ENCODE measurements at regions of chrX and their contacts with region 1.

Region 1: GRCh38 chrX:45710081-45710801 is 509.6 kb upstream of the DIPK2B start:
- DNase-seq: peak; percentile 79
- H3K4me3 Mint-ChIP-seq: peak overlapping the region; percentile 21
- H3K27ac Mint-ChIP-seq: peak overlapping the region; percentile 78
- H3K4me1 Mint-ChIP-seq: peaks cover 49% of the 10 kb centered on the region
- H3K27me3 Mint-ChIP-seq: no peaks in the 10 kb centered on the region

Region 2: DNA sequence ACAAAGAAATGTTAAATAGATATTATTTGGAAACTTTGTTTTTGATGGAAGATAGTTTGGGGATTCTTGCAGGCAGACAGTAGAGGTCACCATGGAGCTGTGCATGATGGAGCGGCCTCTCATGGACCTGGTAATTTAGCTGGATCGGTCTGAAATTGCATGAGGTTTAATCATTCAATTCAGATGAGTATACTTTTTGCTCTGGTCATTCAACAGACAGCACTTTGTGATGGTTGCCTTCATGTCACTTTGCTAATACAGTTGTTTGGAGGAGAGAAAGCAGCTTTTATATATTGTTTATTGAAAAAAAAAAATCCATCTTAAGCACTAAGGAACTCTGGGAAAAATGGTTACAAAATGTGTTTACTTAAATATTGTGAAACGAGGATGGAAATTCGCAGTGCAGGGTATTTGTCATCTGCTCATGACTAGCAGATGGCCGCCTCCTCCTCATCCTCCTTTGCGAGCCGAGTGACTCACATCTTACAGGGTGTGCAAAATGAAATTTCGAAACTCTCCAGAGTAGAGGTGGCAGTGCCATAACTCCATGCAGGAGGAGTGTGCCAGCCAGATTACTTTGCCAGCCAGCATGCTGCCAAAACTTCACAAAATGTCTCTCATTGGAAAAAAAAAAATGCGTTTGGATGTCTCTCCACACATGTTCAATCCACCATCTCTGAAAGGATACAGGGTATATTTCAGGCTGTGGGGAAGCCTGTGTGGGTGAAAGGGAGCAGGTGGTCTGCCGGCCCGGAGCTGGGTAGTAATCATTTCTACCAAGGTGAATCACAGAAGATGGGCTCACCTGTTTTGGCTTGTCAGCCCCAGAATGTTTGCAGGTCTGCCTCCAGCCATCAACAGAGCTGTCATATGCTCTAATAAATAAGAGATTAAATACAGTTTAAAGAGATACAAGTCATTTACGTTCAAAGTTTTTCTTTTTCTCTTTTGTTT is 194.7 kb before region 1 on chrX:
- CTCF ChIA-PET with region 1: no interaction called
- POLR2A ChIA-PET with region 1: no interaction called
- intact Hi-C with region 1: loop called (anchors 10 kb)
- DNase-seq: peak; percentile 53
- H3K4me3 Mint-ChIP-seq: no peak overlapping the region
- H3K27ac Mint-ChIP-seq: peak overlapping the region; percentile 49
- H3K4me1 Mint-ChIP-seq: peaks cover 17% of the 10 kb centered on the region
- H3K27me3 Mint-ChIP-seq: peaks cover 3% of the 10 kb centered on the region

Region 3: GRCh38 chrX:45621376-45622041 is 88.7 kb before region 1 on chrX:
- CTCF ChIA-PET with region 1: interaction called, 4 read pairs
- POLR2A ChIA-PET with region 1: interaction called, 27 read pairs
- intact Hi-C with region 1: loop called (anchors 1 kb)
- DNase-seq: peak; percentile 31
- H3K4me3 Mint-ChIP-seq: no peak overlapping the region
- H3K27ac Mint-ChIP-seq: peak overlapping the region; percentile 83
- H3K4me1 Mint-ChIP-seq: peaks cover 23% of the 10 kb centered on the region
- H3K27me3 Mint-ChIP-seq: peaks cover 2% of the 10 kb centered on the region

Region 4: GRCh38 chrX:45697591-45697990 is 12.7 kb before region 1 on chrX:
- CTCF ChIA-PET with region 1: no interaction called
- POLR2A ChIA-PET with region 1: no interaction called
- intact Hi-C with region 1: loop called (anchors 2 kb)
- DNase-seq: no peak
- H3K4me3 Mint-ChIP-seq: no peak overlapping the region
- H3K27ac Mint-ChIP-seq: no peak overlapping the region
- H3K4me1 Mint-ChIP-seq: peaks cover 22% of the 10 kb centered on the region
- H3K27me3 Mint-ChIP-seq: no peaks in the 10 kb centered on the region

Region 5: GRCh38 chrX:45758319-45758718 is 48.1 kb after region 1 on chrX:
- CTCF ChIA-PET with region 1: interaction called, 5 read pairs
- POLR2A ChIA-PET with region 1: interaction called, 30 read pairs
- intact Hi-C with region 1: loop called (anchors 1 kb)
- DNase-seq: peak; percentile 73
- H3K4me3 Mint-ChIP-seq: peak overlapping the region; percentile 77
- H3K27ac Mint-ChIP-seq: peak overlapping the region; percentile 92
- H3K4me1 Mint-ChIP-seq: peaks cover 72% of the 10 kb centered on the region
- H3K27me3 Mint-ChIP-seq: no peaks in the 10 kb centered on the region

Region 6: DNA sequence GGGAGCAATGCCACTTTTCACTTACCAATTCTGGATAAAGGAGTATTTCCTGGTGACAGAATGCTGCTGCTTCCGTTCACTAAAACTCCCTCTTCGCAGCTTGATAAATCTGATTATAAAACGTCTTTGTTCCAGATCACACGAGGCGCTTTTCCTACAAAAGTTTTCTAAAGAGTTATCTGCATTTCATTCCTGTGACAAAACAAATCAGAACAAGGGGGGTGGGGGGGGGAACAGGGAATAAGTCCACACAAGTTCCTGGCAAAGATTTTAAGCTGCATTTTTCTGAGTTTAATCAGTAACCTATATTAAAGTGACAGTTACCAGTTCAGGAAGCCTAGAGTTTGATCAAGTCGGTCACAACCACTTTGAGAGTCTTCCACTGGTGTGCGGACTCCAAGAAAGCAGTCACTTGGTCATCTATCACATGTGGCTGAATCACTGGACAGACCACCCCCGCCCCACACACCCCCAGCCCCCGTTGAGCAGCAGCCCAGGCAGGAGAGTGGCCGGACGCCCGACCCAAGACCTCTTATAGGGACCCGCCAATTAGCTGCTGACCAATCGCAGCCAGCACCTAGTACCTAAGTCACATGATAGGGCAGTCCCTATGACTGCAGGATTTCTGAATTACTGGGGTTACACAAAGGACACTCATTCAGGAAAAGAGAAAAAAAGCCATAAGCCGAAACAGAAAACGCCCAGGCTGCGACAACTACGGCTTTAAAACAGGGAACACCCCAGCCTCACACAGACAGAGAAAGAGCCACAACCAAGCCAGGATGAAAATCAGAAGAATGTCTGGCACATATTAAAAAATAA is 59.7 kb after region 1 on chrX:
- CTCF ChIA-PET with region 1: interaction called, 5 read pairs
- POLR2A ChIA-PET with region 1: interaction called, 19 read pairs
- intact Hi-C with region 1: no loop called
- DNase-seq: peak; percentile 63
- H3K4me3 Mint-ChIP-seq: peak overlapping the region; percentile 84
- H3K27ac Mint-ChIP-seq: peak overlapping the region; percentile 95
- H3K4me1 Mint-ChIP-seq: peaks cover 54% of the 10 kb centered on the region
- H3K27me3 Mint-ChIP-seq: no peaks in the 10 kb centered on the region

Region 7: GRCh38 chrX:45806410-45807121 is 96.3 kb after region 1 on chrX:
- CTCF ChIA-PET with region 1: interaction called, 3 read pairs
- POLR2A ChIA-PET with region 1: interaction called, 7 read pairs
- intact Hi-C with region 1: loop called (anchors 1 kb)
- DNase-seq: peak; percentile 68
- H3K4me3 Mint-ChIP-seq: peak overlapping the region; percentile 64
- H3K27ac Mint-ChIP-seq: peak overlapping the region; percentile 95
- H3K4me1 Mint-ChIP-seq: peaks cover 85% of the 10 kb centered on the region
- H3K27me3 Mint-ChIP-seq: no peaks in the 10 kb centered on the region

Region 8: GRCh38 chrX:45824471-45824870 is 114.2 kb after region 1 on chrX:
- CTCF ChIA-PET with region 1: no interaction called
- POLR2A ChIA-PET with region 1: no interaction called
- intact Hi-C with region 1: no loop called
- DNase-seq: peak; percentile 77
- H3K4me3 Mint-ChIP-seq: no peak overlapping the region
- H3K27ac Mint-ChIP-seq: peak overlapping the region; percentile 89
- H3K4me1 Mint-ChIP-seq: peaks cover 57% of the 10 kb centered on the region
- H3K27me3 Mint-ChIP-seq: no peaks in the 10 kb centered on the region